CD4-positive, alpha-beta T cell (primary cell): ENCODE measurements at regions of chr7 and their contacts with region 1.

Region 1: GRCh38 chr7:23062452-23062851 is 43.1 kb upstream of the KLHL7 start:
- DNase-seq: no peak
- ATAC-seq: no peak
- H3K4me3 ChIP-seq: no peak overlapping the region
- H3K4me3 Mint-ChIP-seq: no peak overlapping the region
- H3K27ac ChIP-seq: no peak overlapping the region
- H3K27ac Mint-ChIP-seq: no peak overlapping the region
- H3K4me1 ChIP-seq: no peaks in the 10 kb centered on the region
- H3K4me1 Mint-ChIP-seq: no peaks in the 10 kb centered on the region
- H3K27me3 ChIP-seq: no peaks in the 10 kb centered on the region
- H3K27me3 Mint-ChIP-seq: no peaks in the 10 kb centered on the region
- CTCF ChIP-seq: no peak

Region 2: GRCh38 chr7:21690705-21691104 is 1371.7 kb before region 1 on chr7:
- CTCF ChIA-PET with region 1: no interaction called
- POLR2A ChIA-PET with region 1: no interaction called
- intact Hi-C with region 1: loop called in 1 of 2 experiments (anchors 10 kb)
- DNase-seq: no peak
- ATAC-seq: no peak
- H3K4me3 ChIP-seq: no peak overlapping the region
- H3K4me3 Mint-ChIP-seq: no peak overlapping the region
- H3K27ac ChIP-seq: no peak overlapping the region
- H3K27ac Mint-ChIP-seq: no peak overlapping the region
- H3K4me1 ChIP-seq: no peaks in the 10 kb centered on the region
- H3K4me1 Mint-ChIP-seq: no peaks in the 10 kb centered on the region
- H3K27me3 ChIP-seq: no peaks in the 10 kb centered on the region
- H3K27me3 Mint-ChIP-seq: no peaks in the 10 kb centered on the region
- CTCF ChIP-seq: no peak